CD4-positive, alpha-beta memory T cell (primary cell): ENCODE measurements at regions of chr4 and their contacts with region 1.

Region 1: GRCh38 chr4:63851496-63851895 is 557.8 kb downstream of the TECRL start:
- DNase-seq: no peak
- H3K4me3 ChIP-seq: no peak overlapping the region
- H3K4me3 Mint-ChIP-seq: no peak overlapping the region
- H3K27ac ChIP-seq: no peak overlapping the region
- H3K27ac Mint-ChIP-seq: no peak overlapping the region
- H3K4me1 ChIP-seq: no peaks in the 10 kb centered on the region
- H3K4me1 Mint-ChIP-seq: no peaks in the 10 kb centered on the region
- H3K27me3 ChIP-seq: no peaks in the 10 kb centered on the region
- H3K27me3 Mint-ChIP-seq: no peaks in the 10 kb centered on the region

Region 2: GRCh38 chr4:63831590-63832155 is 19.8 kb before region 1 on chr4:
- CTCF ChIA-PET with region 1: no interaction called
- POLR2A ChIA-PET with region 1: no interaction called
- intact Hi-C with region 1: loop called (anchors 1 kb)
- DNase-seq: no peak
- H3K4me3 ChIP-seq: no peak overlapping the region
- H3K4me3 Mint-ChIP-seq: no peak overlapping the region
- H3K27ac ChIP-seq: no peak overlapping the region
- H3K27ac Mint-ChIP-seq: no peak overlapping the region
- H3K4me1 ChIP-seq: no peaks in the 10 kb centered on the region
- H3K4me1 Mint-ChIP-seq: no peaks in the 10 kb centered on the region
- H3K27me3 ChIP-seq: no peaks in the 10 kb centered on the region
- H3K27me3 Mint-ChIP-seq: no peaks in the 10 kb centered on the region

Region 3: GRCh38 chr4:63921561-63921960 is 70.1 kb after region 1 on chr4:
- CTCF ChIA-PET with region 1: no interaction called
- POLR2A ChIA-PET with region 1: no interaction called
- intact Hi-C with region 1: no loop called
- DNase-seq: peak in 1 of 5 donors; percentile 25
- H3K4me3 ChIP-seq: no peak overlapping the region
- H3K4me3 Mint-ChIP-seq: no peak overlapping the region
- H3K27ac ChIP-seq: no peak overlapping the region
- H3K27ac Mint-ChIP-seq: no peak overlapping the region
- H3K4me1 ChIP-seq: no peaks in the 10 kb centered on the region
- H3K4me1 Mint-ChIP-seq: no peaks in the 10 kb centered on the region
- H3K27me3 ChIP-seq: no peaks in the 10 kb centered on the region
- H3K27me3 Mint-ChIP-seq: no peaks in the 10 kb centered on the region

Region 4: GRCh38 chr4:64368741-64369140 is 517.2 kb after region 1 on chr4:
- CTCF ChIA-PET with region 1: no interaction called
- POLR2A ChIA-PET with region 1: no interaction called
- intact Hi-C with region 1: no loop called
- DNase-seq: no peak
- H3K4me3 ChIP-seq: no peak overlapping the region
- H3K4me3 Mint-ChIP-seq: no peak overlapping the region
- H3K27ac ChIP-seq: no peak overlapping the region
- H3K27ac Mint-ChIP-seq: no peak overlapping the region
- H3K4me1 ChIP-seq: no peaks in the 10 kb centered on the region
- H3K4me1 Mint-ChIP-seq: no peaks in the 10 kb centered on the region
- H3K27me3 ChIP-seq: no peaks in the 10 kb centered on the region
- H3K27me3 Mint-ChIP-seq: no peaks in the 10 kb centered on the region